Activated CD8-positive, alpha-beta T cell treated with anti-CD3 and anti-CD28 coated beads for 36 hours (primary cell): ENCODE measurements at regions of chr6 and their contacts with region 1.

Region 1: DNA sequence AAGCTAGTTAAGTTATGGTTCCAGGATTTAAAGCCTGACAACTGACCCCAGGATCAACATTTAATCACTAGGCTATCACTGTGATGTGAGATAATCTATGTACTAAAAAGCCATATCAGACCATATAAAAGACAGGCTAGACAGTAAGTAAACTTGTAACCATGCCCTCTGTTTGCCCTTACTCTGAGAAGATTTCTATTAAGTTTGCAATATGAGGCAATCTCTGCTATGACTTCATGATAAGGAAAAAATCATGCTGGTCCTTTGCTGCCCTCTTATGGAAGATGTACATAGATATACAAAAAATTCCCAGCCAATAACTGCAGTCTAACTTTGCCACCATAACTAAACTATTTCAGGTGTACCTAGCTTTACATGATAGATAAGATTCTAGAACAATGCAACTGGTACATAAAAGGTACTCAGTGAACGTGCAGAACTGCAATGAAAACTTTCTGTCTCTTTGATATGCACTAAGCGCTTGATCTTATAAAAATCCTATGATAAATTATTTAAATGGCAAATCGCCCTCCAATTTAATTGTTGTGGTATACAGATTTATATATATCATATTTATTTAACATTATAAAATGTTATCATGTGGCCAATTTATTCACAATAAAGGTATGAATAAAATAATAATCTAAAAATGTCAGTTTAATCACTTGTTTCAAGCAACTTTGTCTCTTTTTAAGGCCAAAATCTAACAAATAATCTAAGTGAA is 70.5 kb downstream of the FAM217A start:
- DNase-seq: no peak
- ATAC-seq: peak; percentile 53
- H3K4me3 Mint-ChIP-seq: no peak overlapping the region
- H3K27ac Mint-ChIP-seq: no peak overlapping the region
- H3K4me1 Mint-ChIP-seq: peaks cover 49% of the 10 kb centered on the region
- H3K27me3 Mint-ChIP-seq: no peaks in the 10 kb centered on the region
- CTCF ChIP-seq: peak; percentile 29

Region 2: GRCh38 chr6:3456755-3457466 is 551.6 kb before region 1 on chr6 and contains the start of gene SLC22A23:
- CTCF ChIA-PET with region 1: no interaction called
- POLR2A ChIA-PET with region 1: no interaction called
- intact Hi-C with region 1: no loop called
- DNase-seq: peak; percentile 57
- ATAC-seq: peak; percentile 72
- H3K4me3 Mint-ChIP-seq: peak within 1 kb of the TSS; percentile 61
- H3K27ac Mint-ChIP-seq: no peak within 1 kb of the TSS
- H3K4me1 Mint-ChIP-seq: peaks cover 9% of the 10 kb centered on the region
- H3K27me3 Mint-ChIP-seq: peaks cover 27% of the 10 kb centered on the region
- CTCF ChIP-seq: peak; percentile 84
- total RNA-seq, gene SLC22A23: 0.16 to 0.34 TPM

Region 3: DNA sequence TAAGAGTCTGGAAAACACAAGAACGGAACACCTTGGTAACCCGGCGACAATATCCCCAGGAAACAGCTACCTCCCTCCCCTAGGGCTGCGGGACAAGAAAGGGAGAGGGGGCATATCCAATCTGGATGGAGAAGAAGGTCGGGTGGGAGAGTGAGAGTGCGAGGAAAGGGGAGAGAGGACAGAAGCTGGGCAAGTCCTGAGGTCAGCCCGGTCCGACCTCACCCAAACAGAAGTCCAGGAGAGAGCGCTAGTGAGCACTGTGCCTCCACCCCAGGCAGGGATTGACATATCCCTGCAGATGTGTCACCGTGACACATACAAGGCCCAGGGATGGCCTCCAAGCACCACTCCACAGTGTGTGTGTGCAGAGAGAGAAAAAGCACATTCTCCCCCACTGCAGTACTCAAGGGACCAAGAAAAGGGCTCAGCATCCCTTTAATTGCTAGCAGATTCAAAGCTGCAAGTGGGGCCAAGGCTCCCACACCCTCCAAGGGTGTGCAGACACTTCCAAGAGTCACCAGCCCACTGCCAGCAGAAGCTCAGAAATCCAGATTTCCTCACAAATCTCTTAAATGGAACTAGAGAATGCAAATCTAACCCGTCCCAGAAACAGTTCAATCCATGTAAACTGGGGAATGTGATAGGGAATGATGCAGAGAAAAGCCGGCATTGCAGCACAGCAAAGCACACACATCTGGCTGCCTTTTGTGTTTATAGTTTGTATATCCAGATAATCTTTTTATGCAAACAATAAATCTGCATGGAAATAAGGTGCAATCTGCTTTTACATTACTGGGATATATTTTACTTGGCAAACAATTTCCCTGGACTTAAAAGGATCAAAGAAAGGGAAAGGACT is 260.0 kb before region 1 on chr6:
- CTCF ChIA-PET with region 1: interaction called, 14 read pairs
- POLR2A ChIA-PET with region 1: no interaction called
- intact Hi-C with region 1: no loop called
- DNase-seq: peak; percentile 56
- ATAC-seq: peak; percentile 63
- H3K4me3 Mint-ChIP-seq: no peak overlapping the region
- H3K27ac Mint-ChIP-seq: no peak overlapping the region
- H3K4me1 Mint-ChIP-seq: no peaks in the 10 kb centered on the region
- H3K27me3 Mint-ChIP-seq: peaks cover 25% of the 10 kb centered on the region
- CTCF ChIP-seq: peak; percentile 42

Region 4: GRCh38 chr6:3794092-3794491 is 214.4 kb before region 1 on chr6:
- CTCF ChIA-PET with region 1: no interaction called
- POLR2A ChIA-PET with region 1: no interaction called
- intact Hi-C with region 1: no loop called
- DNase-seq: no peak
- ATAC-seq: no peak
- H3K4me3 Mint-ChIP-seq: no peak overlapping the region
- H3K27ac Mint-ChIP-seq: no peak overlapping the region
- H3K4me1 Mint-ChIP-seq: no peaks in the 10 kb centered on the region
- H3K27me3 Mint-ChIP-seq: no peaks in the 10 kb centered on the region
- CTCF ChIP-seq: no peak

Region 5: DNA sequence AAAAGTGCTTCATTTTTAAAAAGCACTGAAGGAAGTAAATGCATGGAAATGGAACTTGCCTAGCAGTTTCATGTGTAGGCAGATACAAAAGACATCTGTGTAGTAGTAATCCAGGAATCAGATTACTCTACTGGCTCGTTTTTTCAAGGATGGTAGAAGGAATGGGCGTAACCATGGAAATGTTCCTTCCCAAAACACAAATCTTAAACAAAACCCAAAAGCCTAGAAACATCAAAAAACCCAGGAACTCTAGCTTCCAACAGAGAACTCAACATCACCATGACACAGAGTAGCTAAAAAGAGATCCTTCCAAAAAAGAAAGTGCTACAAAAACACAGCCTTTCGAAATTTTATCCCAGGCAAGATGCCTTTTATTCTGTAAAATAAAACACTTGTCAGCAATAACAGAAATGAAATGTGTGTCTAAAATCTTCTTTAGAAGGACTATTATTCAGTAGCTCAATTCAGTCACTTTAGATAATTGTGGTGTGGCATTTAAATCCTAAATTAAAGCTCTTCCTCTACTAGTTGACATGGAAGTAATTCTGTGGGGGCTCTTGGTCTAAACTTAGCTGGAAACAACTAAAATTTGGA is 11.2 kb before region 1 on chr6:
- CTCF ChIA-PET with region 1: interaction called, 24 read pairs
- POLR2A ChIA-PET with region 1: no interaction called
- intact Hi-C with region 1: no loop called
- DNase-seq: no peak
- ATAC-seq: no peak
- H3K4me3 Mint-ChIP-seq: no peak overlapping the region
- H3K27ac Mint-ChIP-seq: no peak overlapping the region
- H3K4me1 Mint-ChIP-seq: peaks cover 13% of the 10 kb centered on the region
- H3K27me3 Mint-ChIP-seq: no peaks in the 10 kb centered on the region
- CTCF ChIP-seq: no peak

Region 6: GRCh38 chr6:4253604-4254231 is 245.2 kb after region 1 on chr6:
- CTCF ChIA-PET with region 1: no interaction called
- POLR2A ChIA-PET with region 1: no interaction called
- intact Hi-C with region 1: no loop called
- DNase-seq: no peak
- ATAC-seq: no peak
- H3K4me3 Mint-ChIP-seq: no peak overlapping the region
- H3K27ac Mint-ChIP-seq: no peak overlapping the region
- H3K4me1 Mint-ChIP-seq: no peaks in the 10 kb centered on the region
- H3K27me3 Mint-ChIP-seq: peaks cover 13% of the 10 kb centered on the region
- CTCF ChIP-seq: no peak